T47D (cell line): ENCODE measurements at regions of chr7 and their contacts with region 1.

Region 1: DNA sequence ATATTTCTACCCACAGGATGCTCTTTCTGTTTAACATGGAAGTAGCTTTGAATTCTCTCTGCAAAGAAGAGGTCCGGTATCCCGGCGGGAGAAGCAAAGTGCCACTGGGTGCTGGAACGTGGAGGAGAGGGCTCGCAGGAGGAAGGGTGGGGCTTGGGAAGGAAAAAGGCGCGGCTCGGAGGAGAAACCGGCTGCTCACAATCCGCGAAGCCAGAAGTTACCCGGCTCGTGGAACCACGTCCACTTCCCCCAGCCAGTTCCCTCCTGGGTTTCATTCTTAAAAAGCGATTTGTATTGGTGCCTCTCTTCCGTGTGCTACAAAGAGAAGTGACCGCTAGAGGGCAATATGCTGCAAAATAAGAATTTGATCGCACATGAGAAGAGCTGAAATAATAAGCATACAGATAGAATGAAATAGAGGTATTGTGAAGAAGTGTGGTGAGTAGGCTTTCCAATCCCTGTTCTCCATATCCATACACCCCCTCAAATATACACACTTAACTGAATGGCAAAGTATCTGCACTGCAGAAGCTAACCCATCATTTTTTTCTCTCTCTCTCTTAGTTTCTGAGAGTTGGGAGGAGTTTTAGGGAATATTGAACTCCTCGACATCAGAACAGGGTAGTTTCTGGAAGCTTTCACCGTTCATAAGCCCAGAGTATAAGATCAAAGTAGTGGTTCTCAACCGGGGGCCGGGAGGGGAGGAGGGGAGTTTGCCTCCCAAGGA is 31.1 kb downstream of the TRIL start:
- DNase-seq: peak; percentile 86 to 97

Region 2: DNA sequence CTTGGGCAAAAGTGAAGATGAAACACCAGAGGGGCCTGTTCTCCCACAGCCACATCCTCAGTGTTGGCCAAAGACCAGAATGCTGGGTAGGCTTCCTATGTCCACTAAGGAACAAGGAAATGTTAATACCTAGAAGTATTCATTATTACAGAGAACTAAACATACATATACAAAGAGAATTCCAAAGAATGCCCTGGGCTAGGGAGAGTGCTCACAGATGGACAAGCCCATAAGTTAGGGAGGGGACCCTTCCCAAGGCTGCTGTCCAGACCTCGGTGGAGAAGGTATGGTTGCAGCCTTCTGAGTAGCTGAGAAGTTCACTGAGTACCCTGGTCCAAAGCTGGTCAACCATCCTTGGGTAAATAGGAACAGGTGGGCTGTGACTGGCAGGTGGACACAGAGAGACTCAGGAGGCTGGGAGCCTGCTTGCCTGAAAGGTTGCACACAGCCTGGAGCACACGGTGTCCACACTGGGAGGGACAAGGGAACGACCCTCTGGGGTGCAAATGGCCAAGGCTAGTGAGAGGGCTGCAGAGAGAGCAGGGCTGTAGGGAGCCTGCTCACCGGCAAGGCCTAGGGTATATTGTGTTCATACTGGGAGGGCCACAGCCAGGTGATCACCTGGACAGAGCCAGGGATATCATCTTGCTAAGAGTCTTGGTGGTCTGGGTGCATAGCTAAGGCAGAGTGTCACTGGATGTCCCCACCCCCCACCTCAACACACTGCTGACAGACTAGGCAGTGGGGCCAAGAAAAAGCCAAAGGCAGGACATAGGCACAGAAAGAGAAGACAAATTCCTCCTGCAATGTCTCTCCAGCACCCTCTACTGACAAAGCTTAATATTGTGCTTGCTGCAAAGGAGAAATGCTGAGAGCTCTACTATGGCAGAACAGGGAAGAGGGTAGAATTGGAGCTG is 179.0 kb after region 1 on chr7:
- in situ Hi-C with region 1: loop called (anchors 25 kb)
- DNase-seq: peak in 1 of 2 experiments; percentile 90

Region 3: GRCh38 chr7:29408841-29409243 is 481.8 kb after region 1 on chr7:
- in situ Hi-C with region 1: loop called (anchors 25 kb)
- DNase-seq: peak; percentile 65 to 81